ENCODE measurements at regions of chr6 and their contacts with region 1.

Region 1: GRCh38 chr6:34986845-34987246 is 97.8 kb downstream of the ANKS1A start:
- H3K4me3 ChIP-seq: no peak overlapping the region
- H3K27ac ChIP-seq: no peak overlapping the region
- H3K4me1 ChIP-seq: no peaks in the 10 kb centered on the region
- CTCF ChIP-seq: peak; percentile 70

Region 2: DNA sequence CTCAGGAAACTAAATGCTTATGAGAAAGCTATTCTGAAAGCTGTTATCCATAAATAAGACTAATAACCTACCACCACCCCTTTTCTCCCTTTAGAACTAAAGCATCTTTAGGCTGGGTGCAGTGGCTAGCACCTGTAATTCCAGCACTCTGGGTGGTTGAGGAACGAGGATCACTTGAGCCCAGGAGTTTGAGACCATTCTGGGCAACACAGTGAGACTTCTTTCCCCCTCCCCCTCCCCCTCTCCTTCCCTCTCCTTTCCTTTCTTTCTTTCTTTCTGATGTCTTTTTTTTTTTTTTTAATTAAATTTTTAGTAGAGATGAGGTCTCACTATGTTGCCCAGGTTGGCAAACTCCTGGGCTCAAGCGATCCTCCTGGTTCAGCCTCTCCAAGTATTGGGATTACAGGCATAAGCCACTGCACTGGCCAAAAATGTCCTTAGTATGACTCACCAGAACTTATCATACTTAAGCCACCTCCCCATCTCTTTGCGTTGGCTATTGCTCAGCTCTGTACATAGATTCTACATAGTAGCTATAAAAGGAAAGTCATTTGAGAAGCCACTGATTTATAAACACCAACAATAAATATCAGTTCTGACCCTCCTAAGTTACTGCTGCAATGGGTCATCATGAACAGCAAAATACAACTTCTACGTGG is 375.9 kb before region 1 on chr6:
- CTCF ChIA-PET with region 1: interaction called, 10 read pairs
- POLR2A ChIA-PET with region 1: no interaction called
- H3K4me3 ChIP-seq: no peak overlapping the region
- H3K27ac ChIP-seq: no peak overlapping the region
- H3K4me1 ChIP-seq: peaks cover 7% of the 10 kb centered on the region
- CTCF ChIP-seq: no peak

Region 3: DNA sequence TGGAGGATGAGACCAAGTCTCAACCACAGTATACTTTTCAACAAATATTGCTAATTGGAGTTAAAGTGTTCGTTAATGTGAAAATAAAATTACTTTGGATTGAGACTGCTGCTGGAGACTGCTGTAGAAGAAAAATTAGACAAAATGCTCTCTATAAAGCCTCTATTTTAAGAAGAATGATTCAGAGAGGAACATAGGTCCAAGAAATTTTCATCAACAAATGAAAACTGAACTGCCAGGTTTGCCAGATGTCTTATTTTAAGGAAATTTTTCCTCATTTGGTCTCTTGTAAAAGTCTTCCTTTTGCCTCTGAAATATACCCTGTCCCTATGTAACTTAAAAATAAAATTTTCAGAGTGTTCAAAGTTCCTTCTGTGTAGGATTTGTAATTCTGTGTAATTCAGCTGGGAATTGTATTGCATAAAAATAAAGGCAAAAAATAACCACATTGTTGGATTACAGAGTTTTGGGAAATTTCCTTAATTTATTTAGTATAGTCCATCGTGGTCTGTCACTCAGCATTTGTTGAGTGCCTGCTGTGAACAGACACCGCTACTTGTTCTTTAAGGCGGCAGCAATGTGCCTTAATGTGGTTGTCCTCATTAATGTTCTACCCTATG is 70.4 kb before region 1 on chr6:
- CTCF ChIA-PET with region 1: no interaction called
- POLR2A ChIA-PET with region 1: no interaction called
- H3K4me3 ChIP-seq: no peak overlapping the region
- H3K27ac ChIP-seq: no peak overlapping the region
- H3K4me1 ChIP-seq: peaks cover 2% of the 10 kb centered on the region; the same call in 1 of the 2 replicates
- CTCF ChIP-seq: no peak

Region 4: DNA sequence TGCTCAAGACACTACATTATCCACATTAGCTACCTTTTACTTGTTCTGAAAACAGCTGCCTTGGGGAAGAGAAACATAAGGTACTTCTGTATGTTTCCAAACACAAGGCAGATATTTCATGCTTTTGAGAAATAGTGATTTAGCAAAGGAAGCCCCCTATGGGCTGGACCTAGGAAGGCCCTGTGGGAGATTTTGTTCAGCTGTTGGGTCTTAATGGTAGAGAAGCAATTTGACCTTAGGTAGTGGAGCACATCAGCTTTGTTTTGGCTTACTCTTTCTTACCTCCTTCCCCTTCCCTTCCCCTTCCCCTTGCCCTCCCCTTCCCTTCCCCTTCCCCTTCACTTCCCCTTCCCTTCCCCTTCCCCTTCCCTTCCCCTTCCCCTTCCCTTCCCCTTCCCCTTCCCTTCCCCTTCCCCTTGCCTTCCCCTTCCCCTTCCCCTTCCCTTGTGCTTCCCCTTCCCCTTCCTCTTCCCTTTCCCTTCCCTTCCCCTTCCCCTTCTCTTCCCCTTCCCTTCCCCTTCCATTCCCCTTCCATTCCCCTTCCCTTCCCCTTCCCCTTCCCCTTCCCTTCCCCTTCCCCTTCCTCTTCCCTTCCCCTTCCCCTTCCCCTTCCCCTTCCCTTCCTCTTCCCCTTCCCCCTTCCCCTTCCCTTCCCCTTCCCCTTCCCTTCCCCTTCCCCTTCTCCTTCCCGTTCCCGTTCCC is 13.1 kb before region 1 on chr6:
- CTCF ChIA-PET with region 1: interaction called, 46 read pairs
- POLR2A ChIA-PET with region 1: no interaction called
- H3K4me3 ChIP-seq: no peak overlapping the region
- H3K27ac ChIP-seq: no peak overlapping the region
- H3K4me1 ChIP-seq: no peaks in the 10 kb centered on the region
- CTCF ChIP-seq: no peak

Region 5: GRCh38 chr6:35049900-35050756 is 63.3 kb after region 1 on chr6:
- CTCF ChIA-PET with region 1: interaction called, 31 read pairs
- POLR2A ChIA-PET with region 1: no interaction called
- H3K4me3 ChIP-seq: no peak overlapping the region
- H3K27ac ChIP-seq: no peak overlapping the region
- H3K4me1 ChIP-seq: peaks cover 15% of the 10 kb centered on the region
- CTCF ChIP-seq: no peak

Region 6: GRCh38 chr6:35139908-35140655 is 153.2 kb after region 1 on chr6:
- CTCF ChIA-PET with region 1: interaction called, 165 read pairs
- POLR2A ChIA-PET with region 1: interaction called, 4 read pairs
- H3K4me3 ChIP-seq: no peak overlapping the region
- H3K27ac ChIP-seq: no peak overlapping the region
- H3K4me1 ChIP-seq: peaks cover 2% of the 10 kb centered on the region; the same call in 1 of the 2 replicates
- CTCF ChIP-seq: peak; percentile 70

Region 7: DNA sequence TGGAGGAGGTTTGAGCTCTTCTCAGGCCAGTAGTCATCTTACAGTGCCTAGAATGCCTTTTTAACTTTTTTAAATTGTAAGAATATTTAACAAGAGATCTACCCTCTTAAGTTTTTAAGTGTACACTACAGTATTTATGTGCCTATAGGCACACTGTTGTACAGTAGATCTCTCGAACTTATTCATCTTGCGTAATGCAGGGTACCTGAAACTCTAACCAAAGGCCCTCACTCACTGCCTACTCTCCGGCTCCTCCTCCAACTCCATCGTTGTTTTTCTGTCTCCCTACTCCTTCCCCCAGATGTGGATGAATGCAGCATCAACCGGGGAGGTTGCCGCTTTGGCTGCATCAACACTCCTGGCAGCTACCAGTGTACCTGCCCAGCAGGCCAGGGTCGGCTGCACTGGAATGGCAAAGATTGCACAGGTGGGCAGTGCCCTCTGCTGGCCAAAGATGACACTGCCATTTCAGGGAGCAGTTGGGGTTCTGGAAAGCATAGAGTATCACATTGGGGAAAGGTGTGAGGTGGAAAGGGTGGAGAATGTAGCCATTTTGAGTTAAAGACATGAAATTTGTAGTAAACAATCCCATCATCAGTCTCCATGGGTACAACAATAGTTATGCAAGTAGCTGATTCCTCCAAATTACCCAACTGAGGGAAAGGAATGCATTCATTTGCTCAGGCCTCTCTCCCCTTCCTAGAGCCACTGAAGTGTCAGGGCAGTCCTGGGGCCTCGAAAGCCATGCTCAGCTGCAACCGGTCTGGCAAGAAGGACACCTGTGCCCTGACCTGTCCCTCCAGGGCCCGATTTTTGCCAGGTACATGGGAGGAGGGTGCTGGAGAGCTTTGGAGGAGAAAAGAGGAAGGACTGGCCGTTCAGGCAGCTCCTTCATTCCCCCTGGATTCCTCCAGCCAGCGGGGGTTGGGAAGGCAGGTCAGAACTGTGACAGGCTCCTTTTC is 254.3 kb after region 1 on chr6:
- CTCF ChIA-PET with region 1: interaction called, 84 read pairs
- POLR2A ChIA-PET with region 1: no interaction called
- H3K4me3 ChIP-seq: no peak overlapping the region
- H3K27ac ChIP-seq: no peak overlapping the region
- H3K4me1 ChIP-seq: no peaks in the 10 kb centered on the region
- CTCF ChIP-seq: peak; percentile 96

Measured in HEK293 (cell line).